Right ventricle myocardium superior (tissue), 1 donor: ENCODE measurements at regions of chr3 and their contacts with region 1.

Region 1: DNA sequence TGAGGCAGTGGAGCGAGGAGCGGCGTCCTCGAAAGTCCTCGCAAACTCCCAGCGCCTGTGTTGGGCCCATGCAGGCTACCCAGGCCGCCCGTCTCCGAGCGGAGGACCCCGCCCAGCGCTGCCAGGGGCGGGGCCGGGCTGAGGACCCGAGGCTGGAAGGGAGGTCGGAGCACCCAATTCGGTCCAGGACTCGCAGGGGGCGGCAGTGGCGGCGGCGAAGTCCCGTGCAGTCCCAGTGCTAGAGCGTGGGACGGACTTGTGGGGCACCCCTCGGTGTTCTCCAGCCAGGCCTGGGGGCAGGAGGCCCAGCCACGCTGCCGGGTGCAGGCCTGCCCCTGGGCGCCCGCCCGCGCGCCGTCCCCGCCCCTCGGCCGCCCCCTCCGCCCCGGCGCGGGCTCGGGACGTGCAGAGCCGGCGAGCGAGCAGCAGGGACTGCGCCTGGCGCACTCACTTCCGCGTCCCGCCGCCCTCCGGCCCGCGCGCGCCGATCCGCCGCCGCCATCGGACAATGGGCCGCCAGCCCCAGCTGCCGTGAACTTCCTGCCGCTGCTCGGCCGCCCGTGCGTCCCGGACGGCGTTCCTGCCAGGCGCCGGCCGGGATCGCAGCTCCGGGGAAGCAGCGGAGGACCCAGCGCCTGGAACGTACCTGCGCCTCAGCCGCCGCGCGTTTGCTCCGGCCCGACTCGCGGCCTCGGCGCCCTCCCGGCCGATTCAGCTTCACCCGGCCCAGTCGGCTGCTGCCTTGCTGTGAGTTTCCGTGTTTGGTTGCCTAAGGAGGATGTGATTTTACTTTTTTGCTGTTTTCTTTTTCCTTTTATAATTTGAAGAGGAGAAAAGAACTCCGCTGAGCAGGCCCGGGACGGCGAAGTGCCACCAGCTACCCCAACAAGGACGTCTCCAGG is 592 bp upstream of the LIMD1 start:
- DNase-seq: peak; percentile 86
- ATAC-seq: peak; percentile 86

Region 2: DNA sequence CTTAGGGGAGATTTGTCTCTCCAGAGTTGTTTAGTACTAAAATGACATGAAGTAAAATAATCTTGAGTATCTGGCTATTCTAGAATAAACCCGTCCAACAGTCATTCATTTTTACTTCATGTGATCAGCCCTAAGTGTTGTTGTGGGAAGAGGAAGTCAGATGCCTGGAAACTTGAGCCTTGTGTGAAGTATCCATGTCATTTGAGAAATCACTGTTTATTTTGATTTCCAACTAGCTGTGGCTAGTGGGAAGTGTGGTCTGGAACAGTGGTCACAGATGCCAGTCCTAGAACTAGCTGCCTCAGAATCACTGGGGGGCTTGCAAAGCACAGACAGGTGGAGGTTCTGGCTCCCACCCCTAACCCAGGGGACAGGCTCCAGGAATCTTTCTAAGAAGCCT is 77.1 kb before region 1 on chr3:
- intact Hi-C with region 1: loop called (anchors 5 kb)
- DNase-seq: no peak
- ATAC-seq: no peak

Region 3: DNA sequence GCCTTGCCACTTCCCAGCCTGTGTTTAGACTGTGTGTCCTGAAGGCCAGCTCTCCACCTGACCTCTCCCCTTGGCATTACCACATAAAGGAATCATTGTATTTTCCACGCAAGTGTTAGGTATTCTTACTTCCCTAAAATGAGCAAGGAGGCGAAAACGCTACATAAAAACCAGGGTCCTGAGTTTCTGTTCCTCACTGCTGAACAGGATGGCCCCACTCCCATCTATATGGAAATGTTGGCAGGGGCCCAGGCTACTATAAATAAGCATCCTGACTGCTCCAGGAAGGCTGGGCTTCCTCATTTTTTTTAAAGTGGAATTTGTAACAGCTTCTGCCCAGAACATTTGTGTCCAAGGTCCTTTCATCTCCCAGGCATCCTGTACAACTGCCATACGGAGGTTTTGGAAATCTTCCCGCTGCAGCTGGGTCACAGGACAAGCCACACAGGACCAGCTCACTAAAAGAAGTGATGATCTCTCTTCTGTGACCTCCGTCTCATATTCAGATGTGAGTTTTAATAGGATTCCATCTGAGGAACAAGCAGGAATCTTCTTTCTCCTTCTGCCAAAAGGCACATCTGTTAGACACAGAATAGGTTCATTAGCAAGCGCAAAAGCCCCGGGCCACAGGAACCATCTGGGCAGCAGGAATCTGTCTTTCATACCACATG is 55.9 kb before region 1 on chr3:
- intact Hi-C with region 1: loop called (anchors 2 kb)
- DNase-seq: peak; percentile 73
- ATAC-seq: peak; percentile 84

Region 4: DNA sequence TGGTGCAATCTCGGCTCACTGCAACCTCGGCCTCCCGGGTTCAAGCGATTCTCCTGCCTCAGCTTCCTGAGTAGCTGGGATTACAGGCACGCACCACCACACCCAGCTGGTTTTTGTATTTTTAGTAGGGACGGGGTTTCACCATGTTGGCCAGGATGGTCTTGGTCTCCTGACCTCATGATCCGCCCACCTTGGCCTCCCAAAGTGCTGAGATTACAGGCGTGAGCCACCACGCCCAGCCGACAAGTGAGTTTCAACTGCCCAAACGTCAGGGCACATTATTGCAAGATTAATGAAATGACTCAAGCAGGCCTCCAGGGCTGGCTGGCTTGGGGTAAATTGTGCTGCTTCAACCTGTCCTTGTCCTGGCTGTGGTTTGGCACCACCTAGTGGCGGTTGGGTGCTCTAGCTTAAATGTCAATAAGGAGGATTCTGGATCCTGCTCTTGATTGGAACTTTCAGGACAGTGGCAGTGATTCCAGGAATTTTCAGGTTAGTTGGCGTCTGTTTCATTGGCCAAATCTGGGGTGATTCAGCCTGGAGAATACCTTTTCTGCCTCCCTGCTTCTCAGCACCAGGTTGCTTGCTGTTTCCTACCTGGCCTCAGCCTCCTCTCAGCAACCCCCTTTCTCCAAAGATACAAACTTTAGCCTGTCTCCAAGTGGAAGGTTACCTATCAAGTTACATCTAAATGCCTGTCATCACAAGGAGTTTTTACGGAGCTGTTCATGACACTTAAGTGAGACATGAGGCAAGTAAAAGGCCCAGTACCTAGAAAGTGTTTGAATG is 62.8 kb after region 1 on chr3:
- intact Hi-C with region 1: loop called (anchors 2 kb)
- DNase-seq: peak; percentile 93
- ATAC-seq: peak; percentile 86

Region 5: DNA sequence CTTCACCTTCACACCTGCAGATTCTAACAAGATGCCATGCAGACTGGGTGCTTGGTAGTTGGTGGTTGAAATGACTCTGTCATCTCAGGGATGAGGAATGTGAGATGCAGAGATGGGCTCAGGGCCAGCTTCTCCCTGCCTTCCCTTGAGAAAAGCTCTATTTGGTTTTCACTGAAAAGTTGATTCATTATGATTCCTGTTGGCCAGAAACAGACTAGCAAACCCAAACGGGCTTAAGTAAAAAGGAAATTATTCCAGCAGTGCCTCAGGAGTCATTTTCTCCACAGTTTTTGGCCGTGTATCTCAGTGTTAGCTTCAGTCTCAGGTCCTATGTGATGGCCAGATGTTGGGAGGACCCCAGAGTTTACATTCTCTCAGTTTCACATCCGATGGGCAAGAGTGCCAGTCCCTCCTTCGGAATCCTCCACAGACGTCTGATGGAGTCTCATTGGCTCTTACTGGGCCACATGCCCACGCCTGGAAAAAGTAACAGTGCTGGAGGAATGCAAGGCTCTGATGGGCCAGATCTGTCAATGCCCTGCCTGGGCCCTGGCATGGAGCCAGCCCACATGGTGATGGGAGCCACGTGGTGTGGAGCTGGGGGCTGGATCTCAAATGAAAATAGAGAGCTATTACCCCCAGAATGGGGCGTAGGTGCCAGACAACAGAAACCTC is 72.9 kb after region 1 on chr3:
- intact Hi-C with region 1: no loop called
- DNase-seq: peak; percentile 80
- ATAC-seq: peak; percentile 25